Activated CD4-positive, alpha-beta memory T cell treated with anti-CD3 and anti-CD28 coated beads for 36 hours (primary cell): ENCODE measurements at regions of chr22 and their contacts with region 1.

Region 1: GRCh38 chr22:31489604-31490495 is at the start of gene EIF4ENIF1:
- DNase-seq: peak; percentile 90
- H3K4me3 Mint-ChIP-seq: peak within 1 kb of the TSS; percentile 98
- H3K27ac Mint-ChIP-seq: peak within 1 kb of the TSS; percentile 99
- H3K4me1 Mint-ChIP-seq: peaks cover 54% of the 10 kb centered on the region
- H3K27me3 Mint-ChIP-seq: no peaks in the 10 kb centered on the region
- total RNA-seq, gene EIF4ENIF1: 39.7 to 43.2 TPM

Region 2: DNA sequence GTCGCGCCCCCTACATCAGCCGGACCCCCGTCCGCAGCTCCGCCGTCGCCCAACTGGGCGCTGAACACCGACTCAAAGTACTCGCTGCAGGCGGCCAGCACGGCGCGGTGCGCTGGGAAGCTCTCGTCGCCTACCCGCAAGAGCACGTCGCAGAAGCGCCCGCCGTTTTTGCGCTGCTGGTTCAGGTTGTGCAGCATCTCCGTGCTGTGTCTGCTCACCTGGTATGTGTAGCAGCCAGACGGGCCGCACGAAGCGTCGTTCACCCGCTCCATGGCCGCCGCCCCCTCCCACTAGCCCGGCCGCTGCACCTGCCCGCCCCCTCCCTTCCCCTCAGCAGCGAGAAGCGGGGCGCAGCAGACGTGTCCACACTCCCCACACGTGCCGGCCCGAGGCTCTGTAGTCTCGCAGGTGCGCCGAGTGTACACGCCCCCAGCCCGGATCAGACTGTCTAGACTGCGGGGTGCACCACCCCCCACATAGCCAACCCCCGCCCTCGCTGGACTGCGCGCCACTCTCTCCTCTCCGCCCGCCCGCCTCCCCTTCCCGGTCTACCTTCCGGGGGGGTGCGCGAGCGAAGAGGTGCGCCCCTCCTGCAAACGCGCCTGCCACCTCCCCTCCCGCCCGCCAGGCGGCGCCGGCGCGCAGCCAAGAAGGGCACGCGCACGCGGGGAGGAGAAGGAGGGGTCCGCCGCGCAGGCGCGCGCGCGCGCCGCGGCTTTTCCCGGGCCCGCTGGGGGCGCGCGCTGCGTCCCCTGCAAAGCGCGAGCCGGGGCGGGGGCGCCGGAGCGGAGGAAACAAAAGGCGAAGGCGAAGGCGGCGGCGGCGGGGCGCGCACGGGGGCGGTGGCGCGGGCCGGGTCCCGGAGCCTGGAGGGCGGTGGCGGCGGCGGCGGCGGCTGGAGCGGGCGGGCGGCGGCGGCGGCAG is 144.3 kb before region 1 on chr22:
- CTCF ChIA-PET with region 1: no interaction called
- POLR2A ChIA-PET with region 1: interaction called, 5 read pairs
- intact Hi-C with region 1: loop called (anchors 2 kb)
- DNase-seq: peak; percentile 91
- H3K4me3 Mint-ChIP-seq: peak overlapping the region; percentile 89
- H3K27ac Mint-ChIP-seq: peak overlapping the region; percentile 91
- H3K4me1 Mint-ChIP-seq: peaks cover 46% of the 10 kb centered on the region
- H3K27me3 Mint-ChIP-seq: no peaks in the 10 kb centered on the region

Region 3: DNA sequence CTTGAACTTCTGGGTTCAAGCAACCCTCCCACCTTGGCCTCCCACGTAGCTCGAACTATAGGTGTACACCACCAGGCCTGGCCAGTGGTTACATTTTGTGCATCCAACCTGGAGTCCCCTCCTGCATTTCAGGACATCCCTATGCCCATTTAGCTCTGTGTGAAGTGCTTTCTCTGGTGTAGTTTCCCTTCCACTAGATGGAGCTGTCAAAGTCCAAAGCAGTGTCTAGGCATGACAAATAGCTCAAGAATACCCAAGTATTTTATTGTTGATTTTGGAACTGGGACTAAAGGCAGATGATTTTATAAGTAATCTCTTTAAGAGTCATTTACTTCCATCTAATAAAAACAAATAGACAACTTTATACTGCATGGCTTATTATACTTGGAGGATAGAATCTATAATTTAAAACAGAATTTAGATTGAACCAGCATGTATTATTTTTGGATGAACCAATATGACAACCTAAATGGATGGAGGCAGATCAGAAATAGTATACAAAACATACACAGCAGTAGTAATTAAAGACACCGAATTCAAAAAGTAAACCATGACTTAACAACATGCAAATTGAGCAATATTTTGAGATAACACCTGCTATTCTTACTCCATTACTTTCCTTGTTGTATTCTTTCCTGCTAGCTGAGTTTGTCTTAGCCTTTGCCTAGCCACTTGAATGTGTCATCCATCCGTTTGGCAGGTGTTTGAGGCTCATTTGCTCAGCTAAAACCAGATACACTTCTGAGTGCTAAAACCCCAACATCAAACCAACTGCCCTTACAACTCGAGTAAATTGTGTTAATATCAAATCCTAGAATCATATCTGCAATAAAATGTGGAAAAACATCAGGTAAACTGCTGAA is 37.9 kb before region 1 on chr22:
- CTCF ChIA-PET with region 1: interaction called, 10 read pairs
- POLR2A ChIA-PET with region 1: no interaction called
- intact Hi-C with region 1: loop called (anchors 5 kb)
- DNase-seq: no peak
- H3K4me3 Mint-ChIP-seq: no peak overlapping the region
- H3K27ac Mint-ChIP-seq: peak overlapping the region; percentile 26
- H3K4me1 Mint-ChIP-seq: no peaks in the 10 kb centered on the region
- H3K27me3 Mint-ChIP-seq: no peaks in the 10 kb centered on the region

Region 4: DNA sequence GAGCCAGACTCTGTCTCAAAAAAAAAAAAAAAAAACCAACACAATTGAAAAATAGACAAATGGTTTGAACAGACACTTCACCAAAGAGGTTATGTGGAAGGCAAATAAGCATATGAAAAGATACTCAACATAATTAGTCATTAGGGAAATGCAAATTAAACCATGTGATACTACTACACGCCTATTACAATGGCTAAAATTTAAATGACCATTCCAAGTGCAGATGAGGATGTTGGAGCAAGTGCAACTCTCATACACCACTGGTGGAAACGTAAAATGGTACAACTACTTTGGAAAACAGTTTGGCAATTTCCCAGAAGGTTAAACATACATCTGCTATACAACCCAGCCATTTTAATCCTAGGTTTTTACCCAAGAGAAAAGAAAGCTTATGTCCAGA is 24.5 kb before region 1 on chr22:
- CTCF ChIA-PET with region 1: no interaction called
- POLR2A ChIA-PET with region 1: no interaction called
- intact Hi-C with region 1: no loop called
- DNase-seq: no peak
- H3K4me3 Mint-ChIP-seq: no peak overlapping the region
- H3K27ac Mint-ChIP-seq: no peak overlapping the region
- H3K4me1 Mint-ChIP-seq: no peaks in the 10 kb centered on the region
- H3K27me3 Mint-ChIP-seq: no peaks in the 10 kb centered on the region

Region 5: DNA sequence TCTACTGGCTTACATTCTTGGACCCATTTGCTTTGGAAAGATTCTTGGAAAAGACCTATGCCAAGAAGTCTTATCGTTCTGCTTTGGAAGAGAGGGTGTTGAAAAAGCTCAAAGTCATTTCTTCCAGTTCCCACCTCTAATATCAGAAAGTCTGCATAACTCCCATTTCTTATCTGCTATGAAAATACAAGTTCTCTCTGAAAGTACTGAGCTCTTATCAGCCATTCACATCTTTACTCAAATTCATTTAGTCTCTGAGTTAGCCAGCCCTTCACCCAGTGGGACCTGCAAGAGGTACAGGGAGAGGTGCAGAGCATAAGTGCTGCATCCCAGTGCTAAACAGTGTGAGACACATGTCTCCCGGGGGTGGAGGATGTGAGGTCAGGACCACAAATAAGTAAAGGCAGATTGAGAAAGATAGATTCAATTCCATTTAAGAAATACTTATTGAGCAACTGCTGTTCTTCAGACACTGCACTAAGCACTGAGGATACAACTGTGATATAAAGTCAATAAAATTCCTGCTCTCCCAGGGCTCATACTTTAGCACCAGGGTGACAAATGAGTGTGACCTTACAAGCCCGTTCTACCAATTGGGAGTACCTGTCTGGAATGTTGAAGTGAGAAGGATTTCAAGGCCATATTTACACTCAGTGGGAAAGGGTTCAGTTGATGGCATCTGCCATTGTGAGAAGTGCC is 95.5 kb after region 1 on chr22:
- CTCF ChIA-PET with region 1: no interaction called
- POLR2A ChIA-PET with region 1: no interaction called
- intact Hi-C with region 1: loop called (anchors 2 kb)
- DNase-seq: peak; percentile 49
- H3K4me3 Mint-ChIP-seq: no peak overlapping the region
- H3K27ac Mint-ChIP-seq: peak overlapping the region; percentile 6
- H3K4me1 Mint-ChIP-seq: peaks cover 55% of the 10 kb centered on the region
- H3K27me3 Mint-ChIP-seq: no peaks in the 10 kb centered on the region

Region 6: DNA sequence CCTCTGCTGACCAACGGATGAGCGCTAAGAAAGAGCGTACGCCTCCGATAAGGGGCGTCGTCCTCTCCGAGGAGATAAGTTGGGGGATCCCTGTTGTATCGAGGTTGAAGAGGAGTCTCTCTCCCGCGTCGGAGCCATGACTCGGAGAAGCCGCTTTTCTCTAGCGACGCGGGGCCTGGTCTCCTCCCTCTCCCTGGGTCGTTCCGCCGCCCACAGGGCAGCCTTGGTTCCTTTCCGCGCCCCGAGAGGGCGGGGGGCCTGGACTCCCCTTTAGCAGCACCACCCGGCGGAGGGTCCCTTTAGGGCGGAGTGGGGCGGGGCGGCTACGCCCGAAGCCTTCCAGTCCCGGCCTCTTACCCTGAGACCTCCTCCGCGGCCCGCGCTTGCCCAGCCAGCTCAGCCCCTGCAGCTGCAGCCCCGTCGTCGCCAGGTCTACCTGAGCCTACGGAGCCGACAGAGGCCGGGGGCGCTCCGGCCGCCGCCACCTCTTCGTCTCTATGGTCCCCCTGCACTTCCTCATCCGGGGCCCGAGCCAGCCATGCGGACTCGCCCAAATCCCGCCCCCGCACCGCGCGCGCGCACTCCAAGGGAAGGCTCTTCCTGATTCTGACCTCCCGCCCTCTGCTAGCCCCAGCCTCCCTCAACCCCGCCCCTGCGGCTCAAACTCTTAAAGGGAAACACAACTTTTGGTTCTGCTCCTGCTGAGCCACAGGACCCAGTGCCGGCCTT is 259.9 kb after region 1 on chr22 and contains the start of gene PRR14L:
- CTCF ChIA-PET with region 1: no interaction called
- POLR2A ChIA-PET with region 1: no interaction called
- intact Hi-C with region 1: loop called (anchors 5 kb)
- DNase-seq: peak; percentile 99
- H3K4me3 Mint-ChIP-seq: peak within 1 kb of the TSS; percentile 80
- H3K27ac Mint-ChIP-seq: peak within 1 kb of the TSS; percentile 70
- H3K4me1 Mint-ChIP-seq: peaks cover 50% of the 10 kb centered on the region
- H3K27me3 Mint-ChIP-seq: no peaks in the 10 kb centered on the region
- total RNA-seq, gene PRR14L: 41.3 to 45.2 TPM